GM12878 (cell line): ENCODE measurements at regions of chr5 and their contacts with region 1.

Region 1: GRCh38 chr5:132662925-132663770 is 5.2 kb downstream of the IL13 start:
- DNase-seq: peak; percentile 99
- ATAC-seq: peak; percentile 72
- H3K4me3 ChIP-seq: no peak overlapping the region
- H3K27ac ChIP-seq: peak overlapping the region; percentile 96
- H3K4me1 ChIP-seq: peaks cover 61% of the 10 kb centered on the region
- H3K27me3 ChIP-seq: no peaks in the 10 kb centered on the region
- CTCF ChIP-seq: 0 out of 6 replicates have a peak, but pooled peaks of 2 of the 3 experiments have one; percentile 1 to 2
- EP300 ChIP-seq: peak; percentile 85 to 90; a peak in 3 of 4 replicates
- POLR2A ChIP-seq: peak; percentile 65; the same call in 1 of the 2 replicates
- RAD21 ChIP-seq: peak; percentile 18; the same call in 1 of the 2 replicates

Region 2: GRCh38 chr5:132639706-132640130 is 23.4 kb before region 1 on chr5:
- CTCF ChIA-PET with region 1: interaction called, 28 read pairs
- POLR2A ChIA-PET with region 1: interaction called, 53 read pairs
- RAD21 ChIA-PET with region 1: interaction called, 113 read pairs
- SMC1A ChIA-PET with region 1: interaction called, 119 read pairs
- in situ Hi-C with region 1: no loop called
- intact Hi-C with region 1: loop called (anchors 2 kb)
- DNase-seq: peak; percentile 82
- ATAC-seq: peak; percentile 78
- H3K4me3 ChIP-seq: no peak overlapping the region
- H3K27ac ChIP-seq: peak overlapping the region; percentile 28
- H3K4me1 ChIP-seq: peaks cover 59% of the 10 kb centered on the region
- H3K27me3 ChIP-seq: no peaks in the 10 kb centered on the region
- CTCF ChIP-seq: no peak
- EP300 ChIP-seq: peak in 1 of 2 experiments; percentile 70; a peak in 2 of 4 replicates
- POLR2A ChIP-seq: no peak
- RAD21 ChIP-seq: no peak

Region 3: DNA sequence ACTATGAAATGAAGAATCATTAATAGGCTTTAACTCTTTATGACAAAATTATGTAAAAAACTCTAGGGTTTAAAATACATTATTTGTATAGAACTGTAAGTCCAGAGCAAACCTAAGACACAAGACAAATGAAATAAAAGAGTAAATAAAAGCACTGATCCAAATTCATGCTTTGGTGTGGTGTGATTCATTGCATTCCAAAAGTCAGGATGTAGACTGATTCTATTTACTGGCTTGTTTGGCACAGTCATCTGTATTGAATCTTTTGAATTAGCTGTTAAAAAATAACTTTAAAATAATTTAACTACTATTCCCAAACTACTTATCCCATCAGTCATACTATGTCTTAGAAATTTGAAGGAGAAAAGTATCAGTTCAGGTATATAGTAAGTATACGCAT is 41.7 kb after region 1 on chr5:
- CTCF ChIA-PET with region 1: interaction called, 4 read pairs
- POLR2A ChIA-PET with region 1: interaction called, 6 read pairs
- RAD21 ChIA-PET with region 1: interaction called, 35 read pairs
- SMC1A ChIA-PET with region 1: interaction called, 12 read pairs
- in situ Hi-C with region 1: no loop called
- intact Hi-C with region 1: loop called (anchors 5 kb)
- DNase-seq: no peak
- ATAC-seq: no peak
- H3K4me3 ChIP-seq: no peak overlapping the region
- H3K27ac ChIP-seq: no peak overlapping the region
- H3K4me1 ChIP-seq: no peaks in the 10 kb centered on the region
- H3K27me3 ChIP-seq: no peaks in the 10 kb centered on the region
- CTCF ChIP-seq: no peak
- EP300 ChIP-seq: no peak
- POLR2A ChIP-seq: no peak
- RAD21 ChIP-seq: no peak

Region 4: DNA sequence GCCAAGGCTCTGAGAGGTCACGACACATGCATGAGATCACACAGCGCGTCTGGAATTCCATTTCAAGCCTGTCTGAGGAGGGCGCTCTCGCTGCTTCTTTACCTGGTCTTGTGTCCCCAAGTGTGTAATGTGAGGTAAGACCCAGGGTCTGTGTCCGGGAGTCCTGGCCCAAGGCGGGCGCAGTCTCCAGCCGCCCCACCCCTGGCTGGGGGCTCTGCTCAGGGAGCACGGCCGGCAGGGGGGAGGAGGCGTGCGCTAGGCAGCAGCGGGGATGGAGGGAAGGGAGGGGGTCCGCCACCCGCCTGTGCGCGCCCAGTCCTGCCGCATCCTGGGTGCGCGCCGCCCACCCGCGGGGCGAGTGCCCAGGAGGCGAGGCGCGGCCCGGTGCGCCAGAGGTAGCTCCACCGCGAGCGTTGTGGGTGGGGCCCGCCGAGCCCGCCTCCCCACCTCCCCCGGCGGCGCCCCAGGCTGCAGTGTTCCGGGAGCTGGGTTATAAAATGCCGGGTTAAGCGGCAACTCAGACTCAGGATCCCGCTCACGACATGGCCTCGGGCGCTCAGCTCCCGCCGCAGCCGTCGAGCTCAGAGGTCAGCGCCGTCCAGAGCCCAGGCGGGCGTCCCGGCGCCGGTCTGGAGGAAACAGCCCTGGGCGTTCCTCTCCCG is 83.9 kb after region 1 on chr5 and contains the start of gene CCNI2:
- CTCF ChIA-PET with region 1: interaction called, 22 read pairs
- POLR2A ChIA-PET with region 1: interaction called, 40 read pairs
- RAD21 ChIA-PET with region 1: interaction called, 127 read pairs
- SMC1A ChIA-PET with region 1: interaction called, 69 read pairs
- in situ Hi-C with region 1: no loop called
- intact Hi-C with region 1: loop called (anchors 5 kb)
- DNase-seq: no peak
- ATAC-seq: peak; percentile 71
- H3K4me3 ChIP-seq: peak within 1 kb of the TSS; percentile 72
- H3K27ac ChIP-seq: no peak within 1 kb of the TSS
- H3K4me1 ChIP-seq: peaks cover 23% of the 10 kb centered on the region
- H3K27me3 ChIP-seq: no peaks in the 10 kb centered on the region
- CTCF ChIP-seq: peak; percentile 47 to 56 (median 53)
- EP300 ChIP-seq: no peak
- POLR2A ChIP-seq: peak; percentile 67
- RAD21 ChIP-seq: peak; percentile 20; the same call in 1 of the 2 replicates
- polyA plus RNA-seq, gene CCNI2: 3.1 to 8.0 TPM

Region 5: GRCh38 chr5:132866342-132867045 is 203.3 kb after region 1 on chr5 and contains the starts of genes GDF9 and UQCRQ:
- CTCF ChIA-PET with region 1: no interaction called
- POLR2A ChIA-PET with region 1: no interaction called
- RAD21 ChIA-PET with region 1: no interaction called
- SMC1A ChIA-PET with region 1: interaction called, 3 read pairs
- in situ Hi-C with region 1: no loop called
- intact Hi-C with region 1: loop called (anchors 5 kb)
- DNase-seq: peak; percentile 98
- ATAC-seq: peak; percentile 99
- H3K4me3 ChIP-seq: peak within 1 kb of the TSS; percentile 85
- H3K27ac ChIP-seq: peak within 1 kb of the TSS; percentile 78
- H3K4me1 ChIP-seq: peaks cover 3% of the 10 kb centered on the region
- H3K27me3 ChIP-seq: no peaks in the 10 kb centered on the region
- CTCF ChIP-seq: peak; percentile 10 to 48 (median 18); a peak in 3 of 6 replicates
- EP300 ChIP-seq: no peak
- POLR2A ChIP-seq: peak; percentile 99
- RAD21 ChIP-seq: no peak
- polyA plus RNA-seq, gene GDF9: 0.11 to 0.24 TPM
- polyA plus RNA-seq, gene UQCRQ: 1,403 to 1,579 TPM

Region 6: GRCh38 chr5:133130387-133131118 is 467.4 kb after region 1 on chr5:
- CTCF ChIA-PET with region 1: no interaction called
- POLR2A ChIA-PET with region 1: no interaction called
- RAD21 ChIA-PET with region 1: no interaction called
- SMC1A ChIA-PET with region 1: no interaction called
- in situ Hi-C with region 1: no loop called
- intact Hi-C with region 1: no loop called
- DNase-seq: no peak
- ATAC-seq: no peak
- H3K4me3 ChIP-seq: no peak overlapping the region
- H3K27ac ChIP-seq: no peak overlapping the region
- H3K4me1 ChIP-seq: no peaks in the 10 kb centered on the region
- H3K27me3 ChIP-seq: no peaks in the 10 kb centered on the region; a peak in 1 of 4 replicates
- CTCF ChIP-seq: no peak
- EP300 ChIP-seq: no peak
- POLR2A ChIP-seq: no peak
- RAD21 ChIP-seq: no peak